ENCODE measurements at regions of chr3 and their contacts with region 1.

Region 1: GRCh38 chr3:138051946-138052802 is 42.2 kb downstream of the CLDN18 start:
- DNase-seq: no peak

Region 2: DNA sequence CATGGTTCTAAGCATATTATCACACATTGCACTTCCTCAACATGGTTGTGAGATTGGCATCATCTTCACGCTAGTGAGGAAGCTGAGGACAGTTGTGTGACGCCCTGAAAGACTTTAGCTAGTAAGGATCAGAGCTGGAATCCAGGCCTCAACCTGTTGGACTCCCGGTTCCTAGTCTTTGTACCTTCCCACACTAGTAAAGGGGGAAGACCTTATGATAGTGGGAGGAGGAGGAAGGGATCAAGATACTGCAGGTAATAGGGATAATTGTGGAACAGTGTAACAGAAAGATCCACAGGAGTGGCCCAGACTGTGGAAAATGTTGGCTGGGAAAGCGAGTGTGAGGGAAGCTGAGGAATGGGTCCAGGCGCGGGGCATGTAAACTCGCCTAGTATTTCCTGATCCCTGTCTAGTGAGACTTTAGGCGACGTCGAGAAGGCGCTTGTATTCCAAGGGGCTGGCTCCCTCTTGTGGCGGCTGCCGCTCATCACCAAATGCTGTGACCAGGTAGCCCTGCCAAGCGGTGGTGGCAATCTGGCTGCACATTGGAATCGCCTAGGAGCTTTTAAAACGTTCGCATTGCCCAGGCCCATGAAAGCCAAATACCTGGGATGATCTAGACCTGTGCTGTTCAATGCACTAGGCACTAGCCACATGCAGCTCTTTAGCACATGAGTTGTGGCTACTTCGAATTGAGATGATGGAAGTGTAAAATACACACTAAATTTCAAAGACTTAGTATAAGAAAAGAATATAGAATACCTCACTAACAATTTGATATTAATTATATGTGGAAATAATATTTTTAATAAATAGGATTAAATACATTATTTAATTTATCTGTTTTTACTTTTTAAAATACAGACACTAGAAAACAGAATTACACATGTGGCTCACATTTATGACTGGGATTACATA is 81.0 kb before region 1 on chr3:
- intact Hi-C with region 1: loop called (anchors 10 kb)
- DNase-seq: peak; percentile 84

Measured in cardiac septum (tissue), 1 donor.